Ascending aorta (tissue), 2 donors: ENCODE measurements at regions of chr2 and their contacts with region 1.

Region 1: DNA sequence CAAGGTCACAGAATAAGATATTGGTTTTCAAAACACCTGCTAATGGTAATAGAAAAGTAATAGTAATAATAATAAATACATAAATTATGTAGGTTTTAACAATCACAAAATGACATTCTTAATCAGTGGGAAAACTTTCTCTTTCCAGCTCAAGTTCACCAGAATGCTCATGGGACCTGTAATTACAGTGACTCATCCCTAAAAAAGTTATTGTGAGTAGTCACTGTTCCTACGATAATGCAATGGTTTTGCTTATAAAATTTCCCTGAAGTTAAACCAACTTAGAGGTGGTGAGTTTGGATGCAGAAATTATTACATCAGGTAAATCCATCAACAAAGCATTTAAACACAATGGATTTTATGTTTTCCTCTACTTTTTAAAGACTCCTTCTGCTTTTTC is 502.3 kb downstream of the PID1 start:
- DNase-seq: no peak
- H3K4me3 ChIP-seq: no peak overlapping the region
- H3K27ac ChIP-seq: peak overlapping the region in 1 of 2 donors; percentile 47
- H3K4me1 ChIP-seq: peaks cover 0 to 12% of the 10 kb centered on the region in 2 donors
- H3K27me3 ChIP-seq: no peaks in the 10 kb centered on the region
- CTCF ChIP-seq: no peak

Region 2: GRCh38 chr2:228731517-228731916 is 37.3 kb before region 1 on chr2:
- intact Hi-C with region 1: loop called (anchors 5 kb)
- DNase-seq: peak; percentile 12 to 85
- H3K4me3 ChIP-seq: no peak overlapping the region
- H3K27ac ChIP-seq: peak overlapping the region in 1 of 2 donors; percentile 35
- H3K4me1 ChIP-seq: peaks cover 0 to 2% of the 10 kb centered on the region in 2 donors
- H3K27me3 ChIP-seq: no peaks in the 10 kb centered on the region
- CTCF ChIP-seq: no peak